ENCODE measurements at regions of chrX and their contacts with region 1.

Region 1: DNA sequence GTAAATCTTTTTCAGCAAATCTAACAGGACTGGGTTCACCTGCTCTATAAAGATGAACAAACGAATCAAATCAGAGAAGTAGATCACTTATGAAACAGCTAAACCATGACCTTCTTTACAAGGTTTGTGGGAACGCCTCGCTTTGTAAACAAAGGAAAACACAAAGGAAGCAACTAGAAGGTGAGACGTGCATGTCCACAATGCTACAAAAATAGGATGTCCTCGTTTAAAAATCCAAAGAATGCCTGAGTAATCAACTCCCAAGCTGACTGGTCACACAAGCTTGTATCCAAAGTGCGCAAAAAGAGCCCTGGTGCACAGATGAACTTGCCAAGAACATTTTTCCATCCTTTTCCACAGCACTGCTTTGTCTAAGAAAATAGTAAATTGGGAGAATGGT is 6.3 kb upstream of the SH3KBP1 start:
- DNase-seq: no peak
- H3K4me3 Mint-ChIP-seq: no peak overlapping the region
- H3K27ac Mint-ChIP-seq: no peak overlapping the region
- H3K4me1 Mint-ChIP-seq: peaks cover 12% of the 10 kb centered on the region
- H3K27me3 Mint-ChIP-seq: no peaks in the 10 kb centered on the region

Region 2: GRCh38 chrX:19585332-19586082 is 308.2 kb before region 1 on chrX:
- CTCF ChIA-PET with region 1: no interaction called
- intact Hi-C with region 1: loop called (anchors 2 kb)
- DNase-seq: no peak
- H3K4me3 Mint-ChIP-seq: no peak overlapping the region
- H3K27ac Mint-ChIP-seq: no peak overlapping the region
- H3K4me1 Mint-ChIP-seq: peaks cover 10% of the 10 kb centered on the region
- H3K27me3 Mint-ChIP-seq: no peaks in the 10 kb centered on the region

Region 3: GRCh38 chrX:20101934-20102581 is 208.3 kb after region 1 on chrX:
- CTCF ChIA-PET with region 1: no interaction called
- intact Hi-C with region 1: no loop called
- DNase-seq: no peak
- H3K4me3 Mint-ChIP-seq: no peak overlapping the region
- H3K27ac Mint-ChIP-seq: no peak overlapping the region
- H3K4me1 Mint-ChIP-seq: peaks cover 7% of the 10 kb centered on the region
- H3K27me3 Mint-ChIP-seq: no peaks in the 10 kb centered on the region

Measured in activated naive CD4-positive, alpha-beta T cell treated with anti-CD3 and anti-CD28 coated beads for 36 hours (primary cell).